ENCODE measurements at regions of chr21 and their contacts with region 1.

Region 1: GRCh38 chr21:33127154-33127893 is 57.4 kb downstream of the OLIG1 start:
- DNase-seq: peak; percentile 46 to 59
- ATAC-seq: peak; percentile 93 to 97
- H3K4me3 ChIP-seq: peak overlapping the region; percentile 41
- H3K27ac ChIP-seq: no peak overlapping the region
- H3K4me1 ChIP-seq: peaks cover 10% of the 10 kb centered on the region; the same call in 2 of the 3 replicates
- CTCF ChIP-seq: peak; percentile 78
- EP300 ChIP-seq: no peak
- POLR2A ChIP-seq: no peak
- RAD21 ChIP-seq: peak; percentile 83 to 84

Region 2: GRCh38 chr21:32826329-32827167 is 300.8 kb before region 1 on chr21:
- CTCF ChIA-PET with region 1: interaction called, 15 read pairs
- POLR2A ChIA-PET with region 1: no interaction called
- DNase-seq: peak; percentile 18 to 63
- ATAC-seq: peak; percentile 95
- H3K4me3 ChIP-seq: no peak overlapping the region
- H3K27ac ChIP-seq: no peak overlapping the region
- H3K4me1 ChIP-seq: no peaks in the 10 kb centered on the region
- CTCF ChIP-seq: peak; percentile 43
- EP300 ChIP-seq: no peak
- POLR2A ChIP-seq: no peak
- RAD21 ChIP-seq: peak; percentile 40 to 59; a peak in 3 of 5 replicates

Region 3: DNA sequence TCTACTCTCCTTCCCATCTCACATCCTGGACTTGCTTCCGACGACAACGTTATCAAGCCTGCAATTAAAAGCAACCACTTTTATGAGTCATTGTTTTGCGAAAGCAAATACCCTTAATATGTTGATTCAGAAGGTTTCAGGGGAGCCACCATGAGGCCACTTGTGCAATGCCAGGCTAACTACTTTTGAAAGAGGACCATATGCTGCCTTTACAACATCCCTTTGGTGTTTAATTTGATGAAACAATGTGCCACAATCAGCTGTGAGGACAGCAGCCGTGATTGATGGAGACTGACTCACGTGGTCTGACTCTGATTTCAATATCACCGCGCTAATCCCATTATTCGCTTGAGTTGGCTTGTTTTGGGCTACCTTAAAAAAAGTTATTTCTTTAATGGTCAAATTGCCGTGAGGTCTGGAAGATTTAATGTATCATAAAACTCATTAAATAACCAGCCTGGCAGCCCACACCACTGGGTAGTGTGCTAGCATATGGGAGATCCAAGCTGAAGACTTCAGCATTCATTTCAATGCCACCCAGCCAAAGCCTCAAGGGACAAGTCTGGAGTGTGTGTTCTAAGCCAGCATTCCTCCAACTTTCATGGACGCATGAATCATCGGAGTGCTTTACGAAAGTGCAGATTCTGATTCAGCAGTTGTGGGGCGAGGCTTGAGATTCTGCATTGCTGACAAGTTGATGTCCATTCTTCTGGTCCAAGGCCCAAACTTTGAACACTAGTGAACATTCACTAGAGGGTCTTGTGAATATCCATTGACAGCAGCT is 282.5 kb before region 1 on chr21:
- CTCF ChIA-PET with region 1: no interaction called
- POLR2A ChIA-PET with region 1: no interaction called
- DNase-seq: peak; percentile 11 to 40
- ATAC-seq: peak; percentile 66; a peak in 3 of 6 replicates
- H3K4me3 ChIP-seq: no peak overlapping the region
- H3K27ac ChIP-seq: no peak overlapping the region
- H3K4me1 ChIP-seq: peaks cover 3% of the 10 kb centered on the region; the same call in 1 of the 3 replicates
- CTCF ChIP-seq: no peak
- EP300 ChIP-seq: no peak
- POLR2A ChIP-seq: no peak
- RAD21 ChIP-seq: no peak

Region 4: GRCh38 chr21:32934829-32935228 is 192.5 kb before region 1 on chr21:
- CTCF ChIA-PET with region 1: interaction called, 56 read pairs
- POLR2A ChIA-PET with region 1: no interaction called
- DNase-seq: no peak
- ATAC-seq: no peak
- H3K4me3 ChIP-seq: no peak overlapping the region
- H3K27ac ChIP-seq: no peak overlapping the region
- H3K4me1 ChIP-seq: no peaks in the 10 kb centered on the region
- CTCF ChIP-seq: no peak
- EP300 ChIP-seq: no peak
- POLR2A ChIP-seq: no peak
- RAD21 ChIP-seq: no peak

Region 5: DNA sequence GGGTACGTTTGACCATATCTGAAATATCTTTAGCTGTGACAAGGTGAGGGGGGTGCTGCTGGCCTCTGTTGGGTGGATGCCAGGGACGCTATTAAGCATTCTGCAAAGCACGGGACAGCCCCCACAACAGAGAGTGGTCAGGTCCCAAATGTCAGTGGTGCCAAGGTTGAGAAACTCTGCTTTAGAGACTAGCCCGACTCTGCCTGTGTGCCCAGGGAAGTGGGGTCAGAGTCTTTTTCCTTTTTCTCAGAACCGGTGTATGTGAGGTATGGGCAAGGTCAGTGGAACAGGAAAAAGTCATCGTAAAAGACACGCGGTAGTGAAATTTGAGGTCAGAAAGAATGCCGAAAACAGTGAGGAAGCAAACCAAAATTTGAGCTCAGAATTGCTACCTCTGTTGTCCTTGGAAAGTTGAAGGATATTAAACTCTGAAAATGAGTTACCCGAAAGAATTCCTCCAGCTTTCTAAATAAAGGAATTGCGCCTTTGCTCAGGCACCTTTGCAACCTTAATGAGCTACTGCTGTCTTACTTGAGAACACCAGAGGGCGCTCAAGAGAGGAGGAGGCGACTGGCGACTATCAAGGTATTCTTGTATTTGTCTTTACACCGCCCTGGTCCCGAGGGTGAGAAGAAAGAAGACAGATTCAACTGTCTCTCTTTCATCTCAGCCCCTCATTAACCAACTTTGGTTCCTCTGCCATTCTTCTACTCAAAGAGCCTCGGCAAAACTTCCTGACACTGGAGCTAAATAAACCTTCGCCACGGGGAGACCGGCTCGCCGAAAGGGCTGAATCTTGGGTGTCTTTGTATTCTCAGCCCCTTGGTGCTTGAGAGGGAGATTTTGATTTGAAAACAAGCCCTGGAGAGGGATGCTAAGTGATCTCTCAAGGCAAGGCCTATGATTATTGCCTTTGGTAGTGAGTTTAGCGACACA is 187.0 kb before region 1 on chr21:
- CTCF ChIA-PET with region 1: interaction called, 56 read pairs
- POLR2A ChIA-PET with region 1: no interaction called
- DNase-seq: peak; percentile 7 to 42
- ATAC-seq: peak in 1 of 2 experiments; percentile 71; a peak in 4 of 6 replicates
- H3K4me3 ChIP-seq: no peak overlapping the region
- H3K27ac ChIP-seq: no peak overlapping the region
- H3K4me1 ChIP-seq: peaks cover 5% of the 10 kb centered on the region; the same call in 1 of the 3 replicates
- CTCF ChIP-seq: peak; percentile 52
- EP300 ChIP-seq: no peak
- POLR2A ChIP-seq: no peak
- RAD21 ChIP-seq: peak; percentile 49 to 51

Region 6: GRCh38 chr21:32994305-32994704 is 133.0 kb before region 1 on chr21:
- CTCF ChIA-PET with region 1: interaction called, 51 read pairs
- POLR2A ChIA-PET with region 1: interaction called, 3 read pairs
- DNase-seq: no peak
- ATAC-seq: 0 out of 6 replicates have a peak, but pooled peaks of 1 of the 2 experiments have one; percentile 50
- H3K4me3 ChIP-seq: no peak overlapping the region
- H3K27ac ChIP-seq: no peak overlapping the region
- H3K4me1 ChIP-seq: no peaks in the 10 kb centered on the region
- CTCF ChIP-seq: peak; percentile 44
- EP300 ChIP-seq: no peak
- POLR2A ChIP-seq: no peak
- RAD21 ChIP-seq: peak; percentile 61 to 62

Region 7: DNA sequence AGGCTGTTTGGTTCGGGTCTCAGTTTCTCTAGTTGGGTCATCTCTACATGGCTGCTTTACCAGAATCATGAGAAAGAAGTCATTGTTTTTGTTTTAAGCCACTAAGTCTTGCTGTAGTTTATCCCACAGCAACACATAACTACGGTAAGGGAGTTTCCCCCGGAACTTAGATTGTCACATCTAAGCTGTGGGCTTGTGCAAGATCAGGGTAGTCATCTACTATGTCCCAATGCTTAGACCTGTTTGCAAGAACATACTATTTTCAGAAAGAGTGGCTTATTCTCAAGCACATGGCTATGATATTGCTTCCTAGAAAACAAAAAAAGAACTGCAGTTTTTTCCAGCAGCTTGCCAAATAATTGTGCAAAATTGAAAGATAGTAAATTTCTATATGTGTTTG is 119.6 kb before region 1 on chr21:
- CTCF ChIA-PET with region 1: interaction called, 15 read pairs
- POLR2A ChIA-PET with region 1: no interaction called
- DNase-seq: no peak
- ATAC-seq: no peak
- H3K4me3 ChIP-seq: no peak overlapping the region
- H3K27ac ChIP-seq: no peak overlapping the region
- H3K4me1 ChIP-seq: peaks cover 9% of the 10 kb centered on the region; the same call in 1 of the 3 replicates
- CTCF ChIP-seq: no peak
- EP300 ChIP-seq: no peak
- POLR2A ChIP-seq: no peak
- RAD21 ChIP-seq: no peak

Region 8: GRCh38 chr21:33115631-33116510 is 11.5 kb before region 1 on chr21:
- CTCF ChIA-PET with region 1: interaction called, 23 read pairs
- POLR2A ChIA-PET with region 1: no interaction called
- DNase-seq: no peak
- ATAC-seq: no peak
- H3K4me3 ChIP-seq: no peak overlapping the region
- H3K27ac ChIP-seq: no peak overlapping the region
- H3K4me1 ChIP-seq: no peaks in the 10 kb centered on the region
- CTCF ChIP-seq: no peak
- EP300 ChIP-seq: no peak
- POLR2A ChIP-seq: no peak
- RAD21 ChIP-seq: no peak

Measured in A549 (cell line).